ENCODE measurements at regions of chr3 and their contacts with region 1.

Region 1: GRCh38 chr3:178676942-178677790 is 140.9 kb downstream of the KCNMB2 start:
- DNase-seq: no peak
- ATAC-seq: no peak
- H3K4me3 ChIP-seq: no peak overlapping the region
- H3K4me3 Mint-ChIP-seq: no peak overlapping the region
- H3K27ac ChIP-seq: no peak overlapping the region
- H3K27ac Mint-ChIP-seq: no peak overlapping the region
- H3K4me1 ChIP-seq: no peaks in the 10 kb centered on the region
- H3K4me1 Mint-ChIP-seq: no peaks in the 10 kb centered on the region
- H3K27me3 ChIP-seq: no peaks in the 10 kb centered on the region
- H3K27me3 Mint-ChIP-seq: peaks cover 3% of the 10 kb centered on the region
- CTCF ChIP-seq: no peak

Region 2: GRCh38 chr3:178370387-178370786 is 306.8 kb before region 1 on chr3:
- CTCF ChIA-PET with region 1: no interaction called
- POLR2A ChIA-PET with region 1: no interaction called
- intact Hi-C with region 1: loop called in 1 of 2 experiments (anchors 5 kb)
- DNase-seq: no peak
- ATAC-seq: no peak
- H3K4me3 ChIP-seq: no peak overlapping the region
- H3K4me3 Mint-ChIP-seq: no peak overlapping the region
- H3K27ac ChIP-seq: no peak overlapping the region
- H3K27ac Mint-ChIP-seq: no peak overlapping the region
- H3K4me1 ChIP-seq: no peaks in the 10 kb centered on the region
- H3K4me1 Mint-ChIP-seq: no peaks in the 10 kb centered on the region
- H3K27me3 ChIP-seq: no peaks in the 10 kb centered on the region
- H3K27me3 Mint-ChIP-seq: peaks cover 4% of the 10 kb centered on the region
- CTCF ChIP-seq: no peak

Region 3: DNA sequence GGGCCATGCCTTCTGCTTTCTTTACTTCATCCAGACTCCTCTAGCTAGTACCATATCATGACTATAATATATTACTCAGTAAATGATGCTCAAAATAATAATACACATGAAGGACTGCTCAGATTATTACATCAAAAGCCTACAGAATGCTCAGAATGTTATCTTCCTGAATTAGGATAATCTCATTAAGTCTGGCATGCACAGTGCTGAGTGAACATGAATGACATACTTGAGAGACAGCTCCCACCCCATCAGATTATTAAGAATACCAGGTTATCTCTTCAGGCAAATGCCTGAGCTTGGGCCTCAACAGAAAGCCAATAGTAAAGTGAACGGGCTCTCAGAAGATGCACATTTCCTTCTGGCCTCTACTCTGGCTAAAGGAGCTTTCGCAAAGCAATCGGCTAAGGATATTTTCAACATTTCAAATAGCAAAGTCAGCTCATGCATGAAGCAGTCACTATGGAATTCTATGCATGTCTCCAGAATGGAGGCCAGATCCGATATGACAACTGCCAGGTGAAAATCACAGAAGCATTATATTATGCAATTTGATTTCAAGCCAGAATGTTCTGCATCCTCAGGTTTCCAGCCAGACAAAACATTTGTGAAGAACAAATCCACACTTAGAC is 18.4 kb before region 1 on chr3:
- CTCF ChIA-PET with region 1: no interaction called
- POLR2A ChIA-PET with region 1: no interaction called
- intact Hi-C with region 1: loop called in 1 of 2 experiments (anchors 1 kb)
- DNase-seq: no peak
- ATAC-seq: no peak
- H3K4me3 ChIP-seq: no peak overlapping the region
- H3K4me3 Mint-ChIP-seq: no peak overlapping the region
- H3K27ac ChIP-seq: no peak overlapping the region
- H3K27ac Mint-ChIP-seq: no peak overlapping the region
- H3K4me1 ChIP-seq: no peaks in the 10 kb centered on the region
- H3K4me1 Mint-ChIP-seq: no peaks in the 10 kb centered on the region
- H3K27me3 ChIP-seq: no peaks in the 10 kb centered on the region
- H3K27me3 Mint-ChIP-seq: no peaks in the 10 kb centered on the region
- CTCF ChIP-seq: no peak

Region 4: GRCh38 chr3:178943591-178943990 is 266.4 kb after region 1 on chr3:
- CTCF ChIA-PET with region 1: no interaction called
- POLR2A ChIA-PET with region 1: no interaction called
- intact Hi-C with region 1: no loop called
- DNase-seq: no peak
- ATAC-seq: no peak
- H3K4me3 ChIP-seq: no peak overlapping the region
- H3K4me3 Mint-ChIP-seq: no peak overlapping the region
- H3K27ac ChIP-seq: no peak overlapping the region
- H3K27ac Mint-ChIP-seq: no peak overlapping the region
- H3K4me1 ChIP-seq: no peaks in the 10 kb centered on the region
- H3K4me1 Mint-ChIP-seq: no peaks in the 10 kb centered on the region
- H3K27me3 ChIP-seq: no peaks in the 10 kb centered on the region
- H3K27me3 Mint-ChIP-seq: no peaks in the 10 kb centered on the region
- CTCF ChIP-seq: no peak